Panc1 (cell line): ENCODE measurements at regions of chr7 and their contacts with region 1.

Region 1: DNA sequence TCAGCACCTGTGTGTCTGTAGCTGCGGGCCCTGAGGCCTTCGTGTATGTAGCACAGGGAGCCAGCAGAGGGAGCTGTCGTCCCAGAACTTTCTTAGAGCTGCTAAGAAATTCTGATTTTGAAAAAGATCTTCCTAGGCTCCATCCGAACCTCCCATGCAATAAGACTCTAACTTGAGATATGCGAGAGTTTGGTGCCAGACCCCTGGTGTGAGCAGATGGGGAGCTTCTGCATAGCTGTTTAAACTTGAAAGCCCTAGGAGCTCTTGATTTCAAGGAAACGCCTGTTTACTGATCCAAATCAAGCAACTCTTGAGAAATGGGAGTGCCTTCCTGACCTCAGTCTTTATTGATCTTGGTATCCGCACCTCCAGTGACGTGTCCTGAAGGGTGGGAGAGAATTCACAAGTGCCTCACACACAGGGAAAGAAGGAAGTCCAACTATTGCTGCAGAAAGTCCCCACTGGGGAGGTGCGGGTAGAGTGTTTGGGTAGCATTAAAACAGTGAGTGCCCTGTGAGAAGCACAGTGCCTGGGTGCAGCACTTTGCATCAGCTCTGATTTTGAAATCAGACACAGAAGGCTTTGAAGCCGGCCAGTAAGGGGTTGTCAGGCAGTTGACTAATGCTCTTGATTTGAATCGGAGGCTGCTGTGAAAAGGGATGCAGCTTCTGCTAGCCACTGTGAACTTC is 66.4 kb upstream of the STRIP2 start:
- DNase-seq: peak; percentile 71
- ATAC-seq: peak; percentile 95
- H3K4me3 ChIP-seq: no peak overlapping the region
- H3K27ac ChIP-seq: no peak overlapping the region
- H3K4me1 ChIP-seq: no peaks in the 10 kb centered on the region
- H3K27me3 ChIP-seq: no peaks in the 10 kb centered on the region
- CTCF ChIP-seq: peak; percentile 94

Region 2: DNA sequence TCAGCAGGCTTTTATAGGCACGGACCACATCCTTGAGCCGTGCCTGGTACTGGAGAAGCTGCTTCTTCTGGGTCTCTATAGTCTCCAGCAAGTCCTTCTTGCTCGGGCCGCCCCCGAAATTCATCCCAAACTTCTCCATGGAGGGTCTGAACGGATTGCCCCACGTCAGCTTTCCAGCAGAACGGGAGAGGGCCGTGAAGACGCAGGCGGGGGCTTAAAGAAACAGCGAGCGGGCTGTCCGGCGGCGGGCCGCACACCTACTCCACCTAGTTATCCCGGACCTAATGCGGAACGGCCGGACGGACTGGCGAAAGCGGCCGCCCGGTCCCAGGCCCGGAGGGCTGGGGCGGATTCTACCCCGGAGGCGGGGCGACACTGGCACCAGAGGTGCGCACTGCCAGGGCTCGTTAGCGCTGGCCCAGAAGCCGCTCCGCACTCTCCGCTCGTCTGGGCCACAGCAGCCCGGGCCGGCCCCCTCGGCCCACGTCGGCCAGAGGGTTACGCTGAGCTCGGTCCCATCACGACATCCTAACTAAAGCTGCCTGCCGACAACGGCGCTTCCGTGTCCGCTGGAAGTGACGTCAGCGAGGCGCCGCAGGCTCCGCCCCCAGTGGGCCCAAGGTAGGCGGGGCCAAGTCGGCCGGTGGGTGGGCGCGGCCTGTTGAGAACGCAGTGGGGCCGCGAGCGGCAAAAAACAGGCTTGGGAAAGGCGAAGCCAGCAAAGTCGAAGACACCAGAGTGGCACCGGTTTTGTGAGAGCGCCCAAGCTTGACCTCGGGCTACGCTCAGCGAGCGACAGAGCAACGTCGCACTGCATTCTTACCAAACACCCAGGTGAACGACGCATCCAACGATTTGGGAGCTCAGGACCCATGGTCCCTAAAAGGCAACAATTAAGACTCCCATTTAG is 1782.5 kb before region 1 on chr7 and contains the start of gene GCC1:
- CTCF ChIA-PET with region 1: no interaction called
- POLR2A ChIA-PET with region 1: no interaction called
- in situ Hi-C with region 1: no loop called
- intact Hi-C with region 1: no loop called
- DNase-seq: peak; percentile 53
- ATAC-seq: peak; percentile 86
- H3K4me3 ChIP-seq: peak within 1 kb of the TSS; percentile 80 to 99
- H3K27ac ChIP-seq: peak within 1 kb of the TSS; percentile 94
- H3K4me1 ChIP-seq: peaks cover 26% of the 10 kb centered on the region
- H3K27me3 ChIP-seq: no peaks in the 10 kb centered on the region
- CTCF ChIP-seq: no peak
- total RNA-seq, gene GCC1: 19.1 TPM

Region 3: DNA sequence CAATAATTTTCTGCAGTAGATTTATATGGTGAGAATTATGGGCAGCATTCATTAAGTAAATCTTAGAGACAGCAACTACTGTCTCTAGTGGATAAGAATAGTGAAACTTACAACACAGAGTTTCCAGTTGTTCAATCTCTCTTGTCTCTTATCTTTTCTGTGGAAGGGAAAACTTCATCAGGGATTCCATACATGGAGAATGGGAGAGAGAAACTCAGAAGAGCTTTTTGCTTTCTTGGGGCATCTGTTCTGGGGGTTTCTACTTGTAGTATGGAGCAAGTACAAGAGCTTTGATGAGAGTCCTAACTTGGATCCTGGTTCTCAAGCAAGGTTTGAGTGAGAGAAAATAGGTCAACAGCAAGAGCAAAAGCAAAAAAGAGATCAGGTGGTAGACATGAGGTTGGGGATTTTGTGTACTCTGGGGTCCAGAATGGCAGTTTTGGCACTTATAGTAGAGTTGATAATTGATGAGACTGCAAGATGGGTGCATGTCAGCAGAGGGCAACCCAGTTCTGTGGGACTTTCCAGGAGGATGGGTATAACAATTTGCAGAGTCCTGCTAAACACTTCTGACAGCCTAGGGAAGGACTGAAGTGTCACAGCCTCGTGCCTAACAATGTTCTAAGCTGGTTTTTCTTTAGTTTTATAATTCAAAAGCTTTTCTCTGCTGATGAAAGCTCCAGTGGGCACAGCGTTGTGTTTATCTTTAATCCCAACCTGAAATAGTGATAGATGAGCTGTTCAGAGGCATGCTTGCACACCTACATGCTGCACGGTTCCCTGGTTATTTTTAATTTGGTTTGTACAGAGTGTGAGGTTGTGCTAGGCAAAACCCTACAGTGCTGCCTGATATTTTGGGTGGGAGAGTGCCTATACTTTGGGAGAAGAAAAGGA is 34.4 kb after region 1 on chr7:
- CTCF ChIA-PET with region 1: no interaction called
- POLR2A ChIA-PET with region 1: interaction called, 16 read pairs
- in situ Hi-C with region 1: no loop called
- intact Hi-C with region 1: no loop called
- DNase-seq: peak; percentile 30
- ATAC-seq: peak; percentile 71; the same call in 1 of the 2 replicates
- H3K4me3 ChIP-seq: no peak overlapping the region
- H3K27ac ChIP-seq: no peak overlapping the region
- H3K4me1 ChIP-seq: peaks cover 6% of the 10 kb centered on the region; the same call in 1 of the 2 replicates
- H3K27me3 ChIP-seq: no peaks in the 10 kb centered on the region
- CTCF ChIP-seq: no peak; the same call in none of the 2 replicates

Region 4: DNA sequence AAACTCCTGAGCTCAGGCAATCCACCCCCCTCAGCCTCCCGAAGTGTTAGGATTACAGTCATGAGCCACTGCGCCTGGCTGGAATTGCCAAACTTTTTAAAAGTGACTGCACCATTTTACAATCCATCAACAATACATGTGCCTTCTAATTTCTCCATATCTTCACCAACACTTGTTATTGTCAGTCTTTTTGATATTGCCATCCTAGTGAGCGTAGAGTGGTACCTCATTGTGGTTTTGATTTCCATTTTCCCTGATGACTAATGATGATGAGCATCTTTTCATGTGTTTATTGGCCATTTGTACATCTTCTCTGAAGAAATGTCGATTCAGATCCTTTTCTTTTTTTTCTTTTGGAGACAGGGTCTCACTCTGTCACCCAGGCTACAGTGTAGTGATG is 44.7 kb after region 1 on chr7:
- CTCF ChIA-PET with region 1: no interaction called
- POLR2A ChIA-PET with region 1: no interaction called
- in situ Hi-C with region 1: no loop called
- intact Hi-C with region 1: no loop called
- DNase-seq: no peak
- ATAC-seq: no peak
- H3K4me3 ChIP-seq: no peak overlapping the region
- H3K27ac ChIP-seq: no peak overlapping the region
- H3K4me1 ChIP-seq: no peaks in the 10 kb centered on the region
- H3K27me3 ChIP-seq: no peaks in the 10 kb centered on the region
- CTCF ChIP-seq: no peak

Region 5: DNA sequence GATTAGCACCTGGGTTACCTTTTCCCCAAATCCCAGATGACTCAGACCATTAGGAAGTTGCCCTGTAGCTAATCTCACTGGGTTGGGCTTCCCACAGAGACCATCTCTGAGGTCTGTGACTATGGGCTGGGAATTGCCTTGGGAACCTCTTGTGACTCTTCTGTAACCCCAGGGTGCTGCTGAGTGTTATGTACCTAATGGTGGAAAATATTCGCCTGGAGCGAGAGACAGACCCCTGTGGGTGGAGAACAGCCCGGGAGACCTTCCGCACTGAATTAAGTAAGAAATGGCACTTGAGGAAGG is 86.4 kb after region 1 on chr7:
- CTCF ChIA-PET with region 1: no interaction called
- POLR2A ChIA-PET with region 1: no interaction called
- in situ Hi-C with region 1: no loop called
- intact Hi-C with region 1: no loop called
- DNase-seq: no peak
- ATAC-seq: no peak
- H3K4me3 ChIP-seq: no peak overlapping the region
- H3K27ac ChIP-seq: no peak overlapping the region
- H3K4me1 ChIP-seq: no peaks in the 10 kb centered on the region
- H3K27me3 ChIP-seq: no peaks in the 10 kb centered on the region
- CTCF ChIP-seq: no peak

Region 6: DNA sequence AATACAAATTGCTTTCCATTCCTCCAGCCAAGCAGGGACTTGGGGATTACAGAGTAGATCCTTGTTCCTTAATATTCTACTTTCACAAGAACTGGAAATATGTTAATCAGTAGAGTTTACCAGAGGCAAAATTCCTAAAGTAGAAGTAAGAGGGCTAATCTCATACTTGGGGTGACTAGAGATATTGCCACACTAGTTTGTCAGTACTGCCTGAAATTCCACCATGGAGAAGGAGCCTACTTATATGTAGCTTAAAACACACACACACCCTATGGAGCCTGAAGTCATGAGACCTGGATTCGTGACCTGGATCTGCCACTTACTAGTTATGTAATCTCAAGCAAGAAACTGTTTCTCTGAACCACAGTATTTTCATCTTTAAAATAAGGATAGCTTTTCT is 100.2 kb after region 1 on chr7:
- CTCF ChIA-PET with region 1: interaction called, 11 read pairs
- POLR2A ChIA-PET with region 1: no interaction called
- in situ Hi-C with region 1: no loop called
- intact Hi-C with region 1: loop called (anchors 1 kb)
- DNase-seq: no peak
- ATAC-seq: no peak
- H3K4me3 ChIP-seq: no peak overlapping the region
- H3K27ac ChIP-seq: no peak overlapping the region
- H3K4me1 ChIP-seq: no peaks in the 10 kb centered on the region
- H3K27me3 ChIP-seq: no peaks in the 10 kb centered on the region
- CTCF ChIP-seq: no peak

Region 7: GRCh38 chr7:129635300-129636029 is 267.6 kb after region 1 on chr7:
- CTCF ChIA-PET with region 1: interaction called, 3 read pairs
- POLR2A ChIA-PET with region 1: no interaction called
- in situ Hi-C with region 1: no loop called
- intact Hi-C with region 1: loop called (anchors 10 kb)
- DNase-seq: no peak
- ATAC-seq: peak; percentile 98
- H3K4me3 ChIP-seq: no peak overlapping the region
- H3K27ac ChIP-seq: no peak overlapping the region
- H3K4me1 ChIP-seq: peaks cover 6% of the 10 kb centered on the region; the same call in 1 of the 2 replicates
- H3K27me3 ChIP-seq: no peaks in the 10 kb centered on the region
- CTCF ChIP-seq: peak; percentile 94